Sigmoid colon (tissue), 7 donors: ENCODE measurements at regions of chr9 and their contacts with region 1.

Region 1: DNA sequence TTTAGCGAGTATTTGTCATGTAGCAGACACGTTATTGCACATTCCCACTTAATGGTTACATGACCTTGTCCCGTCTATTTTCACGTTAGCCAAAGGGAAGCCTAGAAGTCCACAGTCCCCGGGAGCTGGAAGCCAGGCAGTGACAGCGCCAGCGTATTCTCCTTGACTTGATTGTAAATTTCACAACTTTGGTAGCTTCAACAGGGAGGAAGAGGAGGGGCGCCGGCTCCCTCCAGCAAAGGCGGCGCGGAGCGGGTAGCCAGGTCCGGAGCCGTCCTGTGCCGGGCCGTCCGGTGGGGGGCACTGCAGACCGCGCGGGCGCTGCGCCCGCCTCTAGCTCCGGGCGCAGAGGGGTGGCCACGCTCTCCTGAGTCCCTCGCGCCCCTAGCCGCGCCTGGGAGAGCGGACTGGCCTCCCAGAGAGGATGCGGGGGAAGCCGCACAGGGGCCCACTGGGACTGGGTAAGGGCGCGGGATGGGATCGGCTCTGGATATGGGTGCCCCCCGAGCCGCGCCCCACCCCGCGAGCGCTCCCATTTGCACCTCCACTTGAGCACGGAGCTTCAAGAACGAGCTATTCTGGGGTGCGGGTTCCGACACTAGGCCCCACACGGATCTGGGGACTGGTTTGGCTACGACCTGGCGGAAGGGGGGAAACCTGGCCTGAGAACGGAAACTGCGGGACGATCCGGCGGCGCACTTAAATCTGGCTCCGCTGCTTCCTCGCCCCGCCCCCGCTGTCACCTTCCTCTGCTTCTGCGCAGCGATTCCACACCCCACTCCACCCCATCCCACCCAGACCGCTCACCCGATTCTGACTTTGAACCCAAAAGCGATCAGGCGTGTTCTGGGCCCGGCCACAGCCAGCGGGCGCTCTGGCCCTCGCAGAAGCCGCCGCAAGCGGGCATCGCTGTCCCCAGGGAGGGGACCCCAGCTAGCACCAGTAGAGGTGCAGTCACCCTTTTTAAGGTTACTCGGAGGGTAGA is 23.8 kb downstream of the KLF4 start:
- DNase-seq: peak; percentile 88
- H3K4me3 ChIP-seq: peak overlapping the region; percentile 30 to 61 (median 50)
- H3K27ac ChIP-seq: peak overlapping the region in 2 of 4 donors; percentile 8 to 24
- H3K4me1 ChIP-seq: peaks cover 0 to 13% (median 5%) of the 10 kb centered on the region in 4 donors
- H3K27me3 ChIP-seq: peaks cover 0 to 15% (median 0%) of the 10 kb centered on the region in 3 donors
- CTCF ChIP-seq: peak; percentile 51 to 94 (median 66)
- EP300 ChIP-seq: no peak
- POLR2A ChIP-seq: no peak

Region 2: GRCh38 chr9:108565651-108566378 is 1100.1 kb after region 1 on chr9:
- intact Hi-C with region 1: loop called (anchors 5 kb)
- DNase-seq: peak; percentile 72
- H3K4me3 ChIP-seq: no peak overlapping the region
- H3K27ac ChIP-seq: no peak overlapping the region
- H3K4me1 ChIP-seq: peaks cover 0 to 6% (median 2%) of the 10 kb centered on the region in 4 donors
- H3K27me3 ChIP-seq: no peaks in the 10 kb centered on the region
- CTCF ChIP-seq: peak; percentile 63 to 83 (median 78)
- EP300 ChIP-seq: no peak
- POLR2A ChIP-seq: no peak

Region 3: DNA sequence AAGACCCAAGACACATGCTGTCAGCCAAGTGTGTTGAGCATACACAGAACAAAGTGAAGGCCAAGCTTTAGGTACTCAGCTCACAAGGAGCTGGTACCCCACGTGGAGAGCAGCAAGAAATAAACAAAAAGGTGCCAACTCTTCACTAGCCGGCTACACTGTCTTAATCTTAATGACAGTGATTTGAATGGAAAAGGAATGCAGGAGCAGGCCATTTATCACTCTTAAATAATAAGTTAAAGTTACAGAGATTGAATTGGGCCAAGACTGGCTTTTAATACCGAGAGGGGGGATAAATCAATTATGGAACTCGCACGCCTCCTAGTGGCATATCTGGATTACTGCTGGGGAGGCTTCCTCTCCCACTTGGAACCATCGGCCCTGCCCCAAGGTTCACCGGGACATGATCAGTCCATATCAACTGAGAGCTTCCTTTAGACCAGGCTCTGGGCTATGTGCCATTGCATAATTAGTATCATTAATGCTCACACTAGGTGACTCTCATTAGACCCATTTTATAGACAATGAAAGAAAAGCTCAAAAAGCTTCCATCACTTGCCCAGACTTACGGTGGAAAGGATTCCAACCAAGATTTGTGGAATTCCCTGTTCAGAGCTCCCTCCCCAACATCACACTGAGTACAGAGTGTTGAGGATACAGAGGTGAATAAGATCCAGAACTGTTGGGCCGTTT is 1296.0 kb after region 1 on chr9:
- intact Hi-C with region 1: loop called (anchors 5 kb)
- DNase-seq: peak; percentile 69
- H3K4me3 ChIP-seq: no peak overlapping the region
- H3K27ac ChIP-seq: no peak overlapping the region
- H3K4me1 ChIP-seq: peaks cover 0 to 12% (median 8%) of the 10 kb centered on the region in 4 donors
- H3K27me3 ChIP-seq: no peaks in the 10 kb centered on the region
- CTCF ChIP-seq: peak; percentile 35 to 80 (median 62)
- EP300 ChIP-seq: no peak
- POLR2A ChIP-seq: no peak